Activated naive CD4-positive, alpha-beta T cell treated with anti-CD3 and anti-CD28 coated beads, Interleukin-2, amount 10 ng/mL, durations not matched to agents 7 days and 5 days (primary cell): ENCODE measurements at regions of chr19 and their contacts with region 1.

Region 1: GRCh38 chr19:8575467-8575997 is 1.7 kb downstream of the MYO1F start:
- DNase-seq: peak; percentile 70
- H3K4me3 Mint-ChIP-seq: peak overlapping the region; percentile 98
- H3K27ac Mint-ChIP-seq: peak overlapping the region; percentile 93
- H3K4me1 Mint-ChIP-seq: peaks cover 95% of the 10 kb centered on the region
- H3K27me3 Mint-ChIP-seq: peaks cover 7% of the 10 kb centered on the region

Region 2: GRCh38 chr19:8585894-8586750 is 10.6 kb after region 1 on chr19:
- CTCF ChIA-PET with region 1: interaction called, 57 read pairs
- DNase-seq: peak; percentile 74
- H3K4me3 Mint-ChIP-seq: no peak overlapping the region
- H3K27ac Mint-ChIP-seq: no peak overlapping the region
- H3K4me1 Mint-ChIP-seq: no peaks in the 10 kb centered on the region
- H3K27me3 Mint-ChIP-seq: peaks cover 19% of the 10 kb centered on the region

Region 3: GRCh38 chr19:8657869-8658268 is 82.3 kb after region 1 on chr19:
- CTCF ChIA-PET with region 1: no interaction called
- DNase-seq: no peak
- H3K4me3 Mint-ChIP-seq: no peak overlapping the region
- H3K27ac Mint-ChIP-seq: peak overlapping the region; percentile 55
- H3K4me1 Mint-ChIP-seq: peaks cover 41% of the 10 kb centered on the region
- H3K27me3 Mint-ChIP-seq: peaks cover 62% of the 10 kb centered on the region